Lower leg skin (tissue), 4 donors: ENCODE measurements at regions of chr3 and their contacts with region 1.

Region 1: GRCh38 chr3:16177962-16178627 is 3.6 kb downstream of the GALNT15 start:
- DNase-seq: peak; percentile 78 to 95
- H3K4me3 ChIP-seq: peak overlapping the region; percentile 53
- CTCF ChIP-seq: peak in 1 of 3 donors; percentile 84
- POLR2A ChIP-seq: no peak

Region 2: GRCh38 chr3:16048435-16049318 is 129.4 kb before region 1 on chr3:
- intact Hi-C with region 1: loop called (anchors 5 kb)
- DNase-seq: peak in 1 of 2 donors; percentile 58
- H3K4me3 ChIP-seq: no peak overlapping the region
- CTCF ChIP-seq: peak in 1 of 3 donors; percentile 81
- POLR2A ChIP-seq: no peak